Vagina (tissue), 2 donors: ENCODE measurements at regions of chr10 and their contacts with region 1.

Region 1: DNA sequence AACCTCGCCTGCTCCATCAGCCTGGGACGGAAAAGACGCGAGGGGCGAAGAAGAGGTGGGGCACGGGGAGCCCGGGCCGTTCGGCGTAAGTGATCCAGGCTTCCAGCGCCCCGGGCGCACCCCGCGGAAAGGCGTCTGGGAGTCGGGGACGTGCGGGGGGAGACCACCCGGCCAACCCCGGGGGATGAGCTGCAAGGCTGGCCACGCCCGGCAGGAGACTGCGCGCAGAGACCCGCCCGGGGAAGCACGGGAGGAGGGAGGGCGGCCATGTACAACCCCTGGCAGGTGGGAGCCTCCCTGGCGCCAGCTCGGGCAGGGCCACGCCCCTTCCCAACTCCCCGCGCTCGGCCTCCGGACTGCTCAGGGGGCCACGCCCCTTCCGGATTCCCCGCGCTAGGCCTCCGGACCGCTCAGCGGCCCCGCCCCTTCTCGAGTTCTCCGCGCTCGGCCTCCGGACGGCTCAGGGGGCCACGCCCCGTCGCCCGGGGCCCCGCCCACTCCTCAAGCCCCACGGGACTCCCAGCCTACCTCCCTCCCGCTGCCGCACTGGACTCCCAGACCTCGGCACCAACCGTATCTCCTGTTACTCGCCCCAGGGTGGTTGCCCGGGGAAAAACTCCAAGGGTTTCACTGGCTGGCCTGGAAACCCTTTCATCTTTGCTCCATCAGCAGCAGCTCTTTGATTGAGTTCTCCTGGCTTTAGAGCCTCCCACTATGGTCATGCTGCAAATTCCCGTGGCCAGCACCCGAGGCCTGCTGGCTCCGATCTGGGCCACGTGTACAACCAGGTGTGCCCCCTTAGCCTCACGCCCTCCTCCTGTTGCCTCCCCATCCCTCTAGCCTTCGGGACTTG is 284.4 kb downstream of the ZEB1 start:
- DNase-seq: peak in 1 of 2 donors; percentile 96
- H3K4me3 ChIP-seq: peak overlapping the region; percentile 60 to 74
- H3K27ac ChIP-seq: peak overlapping the region; percentile 92
- H3K4me1 ChIP-seq: peaks cover 43% of the 10 kb centered on the region
- H3K27me3 ChIP-seq: no peaks in the 10 kb centered on the region
- CTCF ChIP-seq: peak in 1 of 3 experiments; percentile 16
- POLR2A ChIP-seq: peak in 1 of 2 donors; percentile 48

Region 2: DNA sequence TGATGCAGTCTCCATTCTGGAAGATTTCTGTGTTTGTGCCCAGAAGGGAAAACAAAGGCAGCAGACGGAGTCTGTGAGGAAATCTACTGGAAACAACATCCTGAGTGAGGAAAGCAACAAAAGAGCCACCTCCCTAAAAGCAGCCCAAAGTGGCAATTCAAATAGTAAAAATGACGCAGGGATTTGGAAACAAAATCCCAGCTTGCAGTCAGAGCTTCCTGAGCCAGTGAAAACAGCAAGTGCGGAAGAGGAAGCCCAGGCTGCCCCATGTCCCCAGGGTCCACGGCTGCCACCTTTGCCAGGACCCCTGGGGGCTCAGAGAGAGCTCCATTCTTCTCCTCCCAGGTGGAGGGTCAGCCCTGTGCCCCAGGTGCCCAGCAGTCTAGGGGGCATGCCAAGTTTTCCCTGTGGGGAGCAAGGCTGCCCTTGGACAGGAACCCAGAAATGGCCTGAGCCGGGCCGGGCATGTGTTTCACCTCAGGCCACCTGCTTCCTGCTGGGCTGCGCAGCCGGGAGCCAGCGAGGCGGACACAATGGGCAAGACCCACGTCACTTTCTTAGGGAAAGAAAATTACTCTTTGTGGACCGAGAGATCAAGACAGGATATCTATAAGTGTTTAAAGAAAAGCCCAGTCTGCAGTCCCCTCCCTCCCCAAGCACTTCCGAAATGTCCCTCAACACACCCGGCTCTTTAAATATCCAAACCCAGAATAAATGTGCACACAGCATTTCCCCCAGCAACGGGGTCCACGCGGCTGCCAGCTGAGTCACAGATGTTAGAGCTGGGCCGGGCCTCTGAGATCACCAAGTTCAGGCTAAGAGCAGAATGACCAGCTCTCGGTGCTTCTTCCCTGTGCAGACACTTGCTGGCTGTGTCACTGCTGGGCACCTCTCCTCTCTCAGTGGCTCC is 94.1 kb after region 1 on chr10:
- intact Hi-C with region 1: loop called (anchors 5 kb)
- DNase-seq: peak in 1 of 2 donors; percentile 96
- H3K4me3 ChIP-seq: peak overlapping the region; percentile 18 to 21
- H3K27ac ChIP-seq: peak overlapping the region; percentile 94
- H3K4me1 ChIP-seq: peaks cover 61% of the 10 kb centered on the region
- H3K27me3 ChIP-seq: no peaks in the 10 kb centered on the region
- CTCF ChIP-seq: no peak
- POLR2A ChIP-seq: no peak